A673 (cell line): ENCODE measurements at regions of chr3 and their contacts with region 1.

Region 1: GRCh38 chr3:75814797-75815196 is 29.4 kb upstream of the ZNF717 start:
- DNase-seq: no peak
- H3K4me3 ChIP-seq: no peak overlapping the region
- H3K27ac ChIP-seq: no peak overlapping the region
- H3K4me1 ChIP-seq: no peaks in the 10 kb centered on the region
- H3K27me3 ChIP-seq: no peaks in the 10 kb centered on the region
- CTCF ChIP-seq: no peak

Region 2: GRCh38 chr3:75894234-75894633 is 79.4 kb after region 1 on chr3:
- CTCF ChIA-PET with region 1: no interaction called
- POLR2A ChIA-PET with region 1: no interaction called
- intact Hi-C with region 1: no loop called
- DNase-seq: no peak
- H3K4me3 ChIP-seq: no peak overlapping the region
- H3K27ac ChIP-seq: no peak overlapping the region
- H3K4me1 ChIP-seq: no peaks in the 10 kb centered on the region
- H3K27me3 ChIP-seq: no peaks in the 10 kb centered on the region
- CTCF ChIP-seq: no peak

Region 3: GRCh38 chr3:76044601-76045600 is 230.1 kb after region 1 on chr3:
- CTCF ChIA-PET with region 1: no interaction called
- POLR2A ChIA-PET with region 1: no interaction called
- intact Hi-C with region 1: loop called (anchors 5 kb)
- DNase-seq: peak; percentile 39
- H3K4me3 ChIP-seq: no peak overlapping the region
- H3K27ac ChIP-seq: no peak overlapping the region
- H3K4me1 ChIP-seq: no peaks in the 10 kb centered on the region
- H3K27me3 ChIP-seq: no peaks in the 10 kb centered on the region
- CTCF ChIP-seq: peak; percentile 64

Region 4: GRCh38 chr3:76107935-76108570 is 293.3 kb after region 1 on chr3:
- CTCF ChIA-PET with region 1: no interaction called
- POLR2A ChIA-PET with region 1: no interaction called
- intact Hi-C with region 1: loop called (anchors 5 kb)
- DNase-seq: peak; percentile 28
- H3K4me3 ChIP-seq: no peak overlapping the region
- H3K27ac ChIP-seq: no peak overlapping the region
- H3K4me1 ChIP-seq: no peaks in the 10 kb centered on the region
- H3K27me3 ChIP-seq: no peaks in the 10 kb centered on the region
- CTCF ChIP-seq: peak; percentile 64

Region 5: DNA sequence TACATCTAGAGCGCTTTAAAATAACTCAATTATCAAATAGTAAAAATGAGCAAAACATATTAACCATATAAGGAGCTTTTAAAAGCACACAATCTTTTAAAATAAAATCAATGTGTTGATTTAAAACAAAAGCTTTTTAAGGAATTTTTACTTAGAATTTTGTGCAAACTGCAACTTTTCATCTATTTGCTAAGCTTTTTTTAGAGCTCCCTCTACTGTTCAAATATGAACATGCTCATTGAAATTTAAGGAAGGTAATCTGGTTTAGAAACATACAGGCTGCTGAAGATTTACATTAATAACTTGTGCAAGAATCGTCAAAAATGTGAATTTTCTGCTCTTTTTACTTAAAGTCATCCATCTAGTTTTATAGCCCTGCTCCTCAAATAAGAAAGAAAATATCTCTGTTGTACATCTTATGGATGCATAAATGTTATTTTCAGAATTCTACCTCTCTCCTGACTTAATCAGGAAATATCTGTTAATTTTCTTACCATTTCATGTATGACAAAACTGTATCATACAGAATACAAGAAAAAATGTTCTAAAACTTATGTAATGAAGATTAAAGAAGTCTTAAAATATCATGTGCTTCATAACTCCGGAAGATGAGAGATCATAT is 755.8 kb after region 1 on chr3:
- CTCF ChIA-PET with region 1: no interaction called
- POLR2A ChIA-PET with region 1: no interaction called
- intact Hi-C with region 1: loop called (anchors 10 kb)
- DNase-seq: peak; percentile 16
- H3K4me3 ChIP-seq: no peak overlapping the region
- H3K27ac ChIP-seq: no peak overlapping the region
- H3K4me1 ChIP-seq: no peaks in the 10 kb centered on the region
- H3K27me3 ChIP-seq: no peaks in the 10 kb centered on the region
- CTCF ChIP-seq: peak; percentile 61